HCT116 (cell line): ENCODE measurements at regions of chr9 and their contacts with region 1.

Region 1: GRCh38 chr9:128339771-128340690 is at the start of gene SLC27A4:
- DNase-seq: peak; percentile 71
- ATAC-seq: peak; percentile 87
- H3K4me3 ChIP-seq: peak within 1 kb of the TSS; percentile 84 to 86
- H3K27ac ChIP-seq: peak within 1 kb of the TSS; percentile 74
- H3K4me1 ChIP-seq: peaks cover 0 to 20% of the 10 kb centered on the region in 2 experiments; a peak in 2 of 4 replicates
- H3K27me3 ChIP-seq: no peaks in the 10 kb centered on the region
- CTCF ChIP-seq: no peak
- POLR2A ChIP-seq: no peak
- RAD21 ChIP-seq: no peak
- total RNA-seq, gene SLC27A4: 33.9 TPM

Region 2: GRCh38 chr9:128191406-128192046 is 148.5 kb before region 1 on chr9 and contains the start of gene CIZ1:
- CTCF ChIA-PET with region 1: no interaction called
- POLR2A ChIA-PET with region 1: no interaction called
- RAD21 ChIA-PET with region 1: no interaction called
- intact Hi-C with region 1: loop called (anchors 10 kb)
- DNase-seq: peak; percentile 49
- ATAC-seq: peak; percentile 71
- H3K4me3 ChIP-seq: peak within 1 kb of the TSS; percentile 89 to 90
- H3K27ac ChIP-seq: peak within 1 kb of the TSS; percentile 91
- H3K4me1 ChIP-seq: peaks cover 16 to 33% of the 10 kb centered on the region in 2 experiments
- H3K27me3 ChIP-seq: no peaks in the 10 kb centered on the region
- CTCF ChIP-seq: peak in 2 of 3 experiments; percentile 55 to 80; a peak in 4 of 6 replicates
- POLR2A ChIP-seq: peak; percentile 46
- RAD21 ChIP-seq: no peak
- total RNA-seq, gene CIZ1: 144 TPM

Region 3: DNA sequence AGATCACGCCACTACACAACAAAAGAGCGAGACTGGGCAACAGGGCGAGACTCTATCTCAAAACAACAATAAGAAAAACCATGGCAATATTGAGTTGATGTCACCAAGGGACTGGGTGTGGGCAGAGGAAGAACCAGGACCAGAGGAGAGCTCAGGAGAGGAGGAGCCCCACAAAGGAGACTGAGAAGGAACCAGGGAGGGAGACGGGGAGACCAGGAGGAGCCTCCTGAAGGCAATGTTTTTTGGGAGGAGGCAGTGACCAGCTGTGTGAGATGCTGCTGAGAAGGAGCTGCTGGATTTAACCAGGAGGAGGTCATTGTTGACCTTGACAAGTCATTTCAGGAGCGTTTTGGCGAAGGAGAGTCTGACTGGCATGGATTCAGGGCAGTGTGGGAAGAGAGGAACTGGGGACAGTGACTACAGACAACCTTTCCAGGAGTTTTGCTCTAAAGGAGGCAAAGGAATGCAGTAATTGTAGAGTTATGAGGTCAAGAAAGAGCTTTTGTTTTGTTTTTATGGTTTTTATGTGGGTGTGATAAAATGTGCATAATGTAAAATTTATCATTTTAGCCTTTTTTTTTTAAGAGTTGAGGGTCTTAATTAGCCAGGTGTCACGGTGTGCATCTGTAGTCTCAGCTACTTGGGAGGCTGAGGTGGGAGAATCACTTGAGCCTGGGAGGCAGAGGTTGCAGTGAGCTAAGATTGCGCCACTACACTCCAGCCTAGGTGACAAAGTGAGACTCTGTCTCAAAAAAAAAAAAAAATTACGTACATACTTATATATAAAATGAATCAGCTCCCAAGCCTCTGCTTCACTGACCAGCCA is 35.7 kb before region 1 on chr9:
- CTCF ChIA-PET with region 1: interaction called, 14 read pairs
- POLR2A ChIA-PET with region 1: interaction called, 3 read pairs
- RAD21 ChIA-PET with region 1: interaction called in 1 of 2 experiments, 3 read pairs
- intact Hi-C with region 1: loop called (anchors 1 kb)
- DNase-seq: no peak
- ATAC-seq: no peak
- H3K4me3 ChIP-seq: no peak overlapping the region
- H3K27ac ChIP-seq: no peak overlapping the region
- H3K4me1 ChIP-seq: peaks cover 48 to 59% of the 10 kb centered on the region in 2 experiments
- H3K27me3 ChIP-seq: no peaks in the 10 kb centered on the region
- CTCF ChIP-seq: no peak
- POLR2A ChIP-seq: no peak
- RAD21 ChIP-seq: no peak

Region 4: GRCh38 chr9:128322404-128323211 is 17.4 kb before region 1 on chr9 and contains the starts of genes COQ4 and TRUB2:
- CTCF ChIA-PET with region 1: interaction called, 3 read pairs
- POLR2A ChIA-PET with region 1: no interaction called
- RAD21 ChIA-PET with region 1: interaction called in 1 of 2 experiments, 3 read pairs
- intact Hi-C with region 1: loop called (anchors 1 kb)
- DNase-seq: peak; percentile 92
- ATAC-seq: peak; percentile 86
- H3K4me3 ChIP-seq: peak within 1 kb of the TSS; percentile 99 to 100
- H3K27ac ChIP-seq: peak within 1 kb of the TSS; percentile 93
- H3K4me1 ChIP-seq: peaks cover 8 to 19% of the 10 kb centered on the region in 2 experiments
- H3K27me3 ChIP-seq: no peaks in the 10 kb centered on the region
- CTCF ChIP-seq: no peak
- POLR2A ChIP-seq: peak; percentile 27
- RAD21 ChIP-seq: no peak
- total RNA-seq, gene COQ4: 45.8 TPM
- total RNA-seq, gene TRUB2: 42.1 TPM

Region 5: GRCh38 chr9:128361986-128362646 is 22.1 kb after region 1 on chr9:
- CTCF ChIA-PET with region 1: interaction called, 10 read pairs
- POLR2A ChIA-PET with region 1: no interaction called
- RAD21 ChIA-PET with region 1: no interaction called
- intact Hi-C with region 1: no loop called
- DNase-seq: peak; percentile 59
- ATAC-seq: peak; percentile 92
- H3K4me3 ChIP-seq: peak overlapping the region; percentile 25 to 33
- H3K27ac ChIP-seq: peak overlapping the region; percentile 29
- H3K4me1 ChIP-seq: peaks cover 7 to 28% of the 10 kb centered on the region in 2 experiments; a peak in 3 of 4 replicates
- H3K27me3 ChIP-seq: no peaks in the 10 kb centered on the region
- CTCF ChIP-seq: peak in 2 of 3 experiments; percentile 85 to 88; a peak in 4 of 6 replicates
- POLR2A ChIP-seq: no peak
- RAD21 ChIP-seq: no peak

Region 6: DNA sequence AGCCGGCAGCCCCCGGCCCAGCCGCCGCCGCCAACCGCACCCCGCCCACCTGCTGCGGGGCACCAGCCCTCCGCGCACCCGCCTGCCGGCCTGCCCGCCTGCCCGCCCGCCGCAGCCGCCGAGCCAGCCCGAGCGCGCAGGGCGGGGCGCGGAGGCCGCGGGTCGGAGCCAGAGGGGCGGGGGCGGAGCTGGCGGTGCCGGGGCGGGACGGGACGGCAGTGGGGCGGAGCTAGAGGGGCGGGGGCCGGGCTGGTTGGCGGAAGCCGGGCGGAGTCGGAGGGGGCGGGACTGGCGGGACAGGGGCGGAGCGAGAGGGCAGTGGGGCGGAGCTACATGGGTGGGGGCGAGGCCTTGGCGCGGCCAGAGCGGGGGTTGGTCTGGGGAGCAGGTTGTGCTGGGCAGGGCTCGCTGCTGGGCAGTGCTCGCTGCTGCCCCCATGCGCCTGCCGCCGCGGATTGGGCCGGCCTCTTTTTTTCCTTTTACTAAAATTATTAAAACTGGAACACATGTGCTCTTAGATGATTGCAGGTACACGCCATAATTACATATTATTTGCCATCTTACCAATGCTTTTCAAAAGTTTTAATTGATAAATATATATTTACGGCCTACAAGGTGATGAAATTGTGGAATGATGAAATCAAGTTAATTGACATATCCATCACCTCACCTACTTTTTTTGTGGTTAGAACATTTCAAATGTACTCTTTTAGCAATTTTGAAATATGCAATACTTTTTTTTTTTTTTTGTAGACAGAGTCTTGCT is 688.3 kb after region 1 on chr9 and contains the start of gene SH3GLB2:
- CTCF ChIA-PET with region 1: no interaction called
- POLR2A ChIA-PET with region 1: no interaction called
- RAD21 ChIA-PET with region 1: no interaction called
- intact Hi-C with region 1: no loop called
- DNase-seq: peak; percentile 83
- ATAC-seq: peak; percentile 89
- H3K4me3 ChIP-seq: peak within 1 kb of the TSS; percentile 89 to 96
- H3K27ac ChIP-seq: peak within 1 kb of the TSS; percentile 80
- H3K4me1 ChIP-seq: peaks cover 27 to 42% of the 10 kb centered on the region in 2 experiments; a peak in 3 of 4 replicates
- H3K27me3 ChIP-seq: no peaks in the 10 kb centered on the region
- CTCF ChIP-seq: peak in 2 of 3 experiments; percentile 70 to 89; a peak in 4 of 6 replicates
- POLR2A ChIP-seq: no peak
- RAD21 ChIP-seq: no peak
- total RNA-seq, gene SH3GLB2: 87.9 TPM